ENCODE measurements at regions of chr2 and their contacts with region 1.

Region 1: GRCh38 chr2:148739454-148740105 is 95.0 kb downstream of the EPC2 start:
- DNase-seq: no peak
- ATAC-seq: no peak
- H3K4me3 ChIP-seq: no peak overlapping the region
- H3K27ac ChIP-seq: no peak overlapping the region
- H3K4me1 ChIP-seq: peaks cover 21% of the 10 kb centered on the region
- H3K27me3 ChIP-seq: no peaks in the 10 kb centered on the region
- CTCF ChIP-seq: no peak

Region 2: GRCh38 chr2:148644883-148645538 is 94.6 kb before region 1 on chr2:
- intact Hi-C with region 1: loop called in 1 of 2 experiments (anchors 5 kb)
- DNase-seq: peak; percentile 94 to 97
- ATAC-seq: peak; percentile 86 to 90 (median 90)
- H3K4me3 ChIP-seq: peak overlapping the region; percentile 82
- H3K27ac ChIP-seq: peak overlapping the region; percentile 97
- H3K4me1 ChIP-seq: peaks cover 27% of the 10 kb centered on the region
- H3K27me3 ChIP-seq: no peaks in the 10 kb centered on the region
- CTCF ChIP-seq: peak; percentile 41

Region 3: DNA sequence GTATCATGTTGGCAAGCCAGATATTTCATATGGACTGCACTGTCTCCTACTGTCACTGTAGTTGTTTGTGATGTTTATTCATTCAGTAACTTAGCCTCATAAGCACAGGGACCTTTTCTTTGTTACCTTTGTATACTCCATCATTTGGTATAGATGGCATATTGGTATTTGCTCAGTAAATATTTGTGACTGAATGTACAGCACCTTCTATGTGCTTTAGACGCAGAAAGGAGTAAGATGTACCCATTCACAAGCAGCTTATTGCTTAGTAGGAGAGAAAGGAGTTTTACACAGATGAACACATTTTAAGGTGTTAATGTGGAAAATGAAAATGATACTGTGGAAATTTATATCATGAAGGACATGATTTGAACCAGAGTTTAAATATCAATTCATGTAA is 83.1 kb before region 1 on chr2:
- intact Hi-C with region 1: no loop called
- DNase-seq: no peak
- ATAC-seq: no peak
- H3K4me3 ChIP-seq: no peak overlapping the region
- H3K27ac ChIP-seq: no peak overlapping the region
- H3K4me1 ChIP-seq: peaks cover 90% of the 10 kb centered on the region
- H3K27me3 ChIP-seq: no peaks in the 10 kb centered on the region
- CTCF ChIP-seq: no peak

Region 4: GRCh38 chr2:148842050-148842449 is 102.5 kb after region 1 on chr2:
- intact Hi-C with region 1: no loop called
- DNase-seq: no peak
- ATAC-seq: no peak
- H3K4me3 ChIP-seq: no peak overlapping the region
- H3K27ac ChIP-seq: no peak overlapping the region
- H3K4me1 ChIP-seq: no peaks in the 10 kb centered on the region
- H3K27me3 ChIP-seq: no peaks in the 10 kb centered on the region
- CTCF ChIP-seq: no peak

Region 5: GRCh38 chr2:149017116-149017985 is 277.8 kb after region 1 on chr2:
- intact Hi-C with region 1: no loop called
- DNase-seq: peak; percentile 58 to 77
- ATAC-seq: peak in 3 of 4 donors; percentile 51 to 77 (median 63)
- H3K4me3 ChIP-seq: no peak overlapping the region
- H3K27ac ChIP-seq: no peak overlapping the region
- H3K4me1 ChIP-seq: no peaks in the 10 kb centered on the region
- H3K27me3 ChIP-seq: no peaks in the 10 kb centered on the region
- CTCF ChIP-seq: peak; percentile 82